ENCODE measurements at regions of chr1 and their contacts with region 1.

Region 1: DNA sequence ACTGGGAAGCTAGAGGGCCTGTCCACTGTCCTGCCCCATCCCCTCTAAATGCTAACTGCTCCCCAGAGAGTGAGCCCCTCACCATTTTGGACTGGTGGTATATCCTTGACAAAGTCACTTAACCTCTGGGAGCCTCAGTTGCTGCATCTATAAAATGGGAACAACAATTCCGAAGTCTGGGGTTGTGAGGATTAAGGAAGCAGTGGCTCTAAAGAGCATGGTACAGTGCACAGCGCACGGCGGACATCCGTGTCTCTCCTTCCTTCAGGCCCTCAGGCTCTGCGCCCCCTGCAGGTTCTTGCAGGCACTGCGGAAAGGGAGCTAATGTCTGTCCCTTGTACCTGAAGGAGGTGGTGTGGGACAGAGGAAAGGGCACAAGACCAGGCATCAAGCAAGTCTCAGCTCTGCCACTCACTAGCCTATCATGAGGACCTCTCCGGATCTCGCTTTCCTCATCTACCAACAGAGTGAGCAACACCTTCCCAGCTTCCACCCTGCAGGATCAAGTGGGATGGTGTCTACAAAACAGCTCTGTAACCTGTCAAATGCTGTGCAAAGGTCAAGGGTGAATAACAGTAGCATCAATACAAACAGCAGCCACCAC is 20.1 kb downstream of the ECE1 start:
- DNase-seq: no peak
- H3K4me3 ChIP-seq: no peak overlapping the region
- H3K27ac ChIP-seq: no peak overlapping the region
- H3K27me3 ChIP-seq: no peaks in the 10 kb centered on the region
- CTCF ChIP-seq: peak; percentile 89

Region 2: GRCh38 chr1:21287905-21288514 is 17.8 kb after region 1 on chr1:
- CTCF ChIA-PET with region 1: interaction called, 33 read pairs
- POLR2A ChIA-PET with region 1: interaction called, 4 read pairs
- DNase-seq: no peak
- H3K4me3 ChIP-seq: no peak overlapping the region
- H3K27ac ChIP-seq: no peak overlapping the region
- H3K27me3 ChIP-seq: no peaks in the 10 kb centered on the region
- CTCF ChIP-seq: no peak

Region 3: DNA sequence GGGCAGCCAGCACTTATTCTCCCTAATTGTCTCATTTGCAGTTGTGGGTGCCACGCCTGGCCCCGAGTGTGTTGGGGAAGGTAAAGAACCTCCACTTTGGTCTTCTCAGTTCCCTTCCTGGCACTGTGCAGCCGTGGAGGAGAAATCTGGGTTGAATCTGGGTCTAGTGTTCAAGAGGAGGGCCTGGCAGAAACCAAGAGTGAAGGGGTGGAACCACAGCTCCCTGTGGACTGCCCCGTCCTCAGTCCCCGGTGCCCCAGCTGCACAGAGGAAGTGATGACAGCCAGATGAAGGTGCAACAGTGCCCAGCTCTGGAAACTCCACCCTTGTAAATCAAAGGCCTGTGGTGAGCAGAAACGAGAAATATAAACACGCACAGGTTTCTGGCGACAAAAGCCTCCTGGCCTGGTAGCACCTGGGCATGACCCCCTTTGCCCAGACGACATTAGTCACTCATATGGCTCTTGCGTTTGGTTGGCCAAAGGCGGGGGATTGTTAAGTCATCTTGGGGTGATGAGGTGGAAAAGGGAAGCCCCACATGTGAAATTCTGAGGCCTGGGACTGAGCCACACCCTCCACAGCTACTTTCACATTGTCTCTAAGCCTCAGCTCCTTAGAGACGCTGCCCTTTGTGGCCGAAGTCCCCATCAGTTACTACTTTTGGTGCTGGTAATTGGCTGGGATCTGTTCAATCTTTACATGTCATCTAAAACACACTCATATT is 24.2 kb after region 1 on chr1:
- CTCF ChIA-PET with region 1: interaction called, 14 read pairs
- POLR2A ChIA-PET with region 1: no interaction called
- DNase-seq: no peak
- H3K4me3 ChIP-seq: no peak overlapping the region
- H3K27ac ChIP-seq: no peak overlapping the region
- H3K27me3 ChIP-seq: no peaks in the 10 kb centered on the region
- CTCF ChIP-seq: no peak

Measured in AG04450 (cell line).